ENCODE measurements at regions of chr12 and their contacts with region 1.

Region 1: GRCh38 chr12:124422570-124423523 is 128.0 kb downstream of the RFLNA start:
- DNase-seq: peak; percentile 92
- H3K4me3 ChIP-seq: peak overlapping the region in 3 of 4 donors; percentile 4 to 40 (median 26)
- H3K27ac ChIP-seq: peak overlapping the region; percentile 93 to 98 (median 98)
- H3K4me1 ChIP-seq: peaks cover 32 to 55% (median 43%) of the 10 kb centered on the region in 4 donors
- H3K27me3 ChIP-seq: no peaks in the 10 kb centered on the region
- CTCF ChIP-seq: peak in 2 of 5 experiments; percentile 17 to 24
- EP300 ChIP-seq: peak; percentile 85
- POLR2A ChIP-seq: peak; percentile 43

Region 2: GRCh38 chr12:124388679-124389536 is 33.9 kb before region 1 on chr12:
- in situ Hi-C with region 1: no loop called
- intact Hi-C with region 1: loop called (anchors 5 kb)
- DNase-seq: peak; percentile 85
- H3K4me3 ChIP-seq: peak overlapping the region; percentile 11 to 60 (median 35)
- H3K27ac ChIP-seq: peak overlapping the region; percentile 87 to 92 (median 91)
- H3K4me1 ChIP-seq: peaks cover 50 to 78% (median 62%) of the 10 kb centered on the region in 4 donors
- H3K27me3 ChIP-seq: no peaks in the 10 kb centered on the region
- CTCF ChIP-seq: peak in 1 of 5 experiments; percentile 14
- EP300 ChIP-seq: no peak
- POLR2A ChIP-seq: peak; percentile 49

Region 3: GRCh38 chr12:124457287-124458219 is 34.7 kb after region 1 on chr12:
- in situ Hi-C with region 1: no loop called
- intact Hi-C with region 1: loop called (anchors 5 kb)
- DNase-seq: peak; percentile 73
- H3K4me3 ChIP-seq: peak overlapping the region; percentile 9 to 36 (median 22)
- H3K27ac ChIP-seq: peak overlapping the region; percentile 84 to 94 (median 86)
- H3K4me1 ChIP-seq: peaks cover 33 to 60% (median 46%) of the 10 kb centered on the region in 4 donors
- H3K27me3 ChIP-seq: no peaks in the 10 kb centered on the region
- CTCF ChIP-seq: no peak
- EP300 ChIP-seq: no peak
- POLR2A ChIP-seq: no peak

Region 4: DNA sequence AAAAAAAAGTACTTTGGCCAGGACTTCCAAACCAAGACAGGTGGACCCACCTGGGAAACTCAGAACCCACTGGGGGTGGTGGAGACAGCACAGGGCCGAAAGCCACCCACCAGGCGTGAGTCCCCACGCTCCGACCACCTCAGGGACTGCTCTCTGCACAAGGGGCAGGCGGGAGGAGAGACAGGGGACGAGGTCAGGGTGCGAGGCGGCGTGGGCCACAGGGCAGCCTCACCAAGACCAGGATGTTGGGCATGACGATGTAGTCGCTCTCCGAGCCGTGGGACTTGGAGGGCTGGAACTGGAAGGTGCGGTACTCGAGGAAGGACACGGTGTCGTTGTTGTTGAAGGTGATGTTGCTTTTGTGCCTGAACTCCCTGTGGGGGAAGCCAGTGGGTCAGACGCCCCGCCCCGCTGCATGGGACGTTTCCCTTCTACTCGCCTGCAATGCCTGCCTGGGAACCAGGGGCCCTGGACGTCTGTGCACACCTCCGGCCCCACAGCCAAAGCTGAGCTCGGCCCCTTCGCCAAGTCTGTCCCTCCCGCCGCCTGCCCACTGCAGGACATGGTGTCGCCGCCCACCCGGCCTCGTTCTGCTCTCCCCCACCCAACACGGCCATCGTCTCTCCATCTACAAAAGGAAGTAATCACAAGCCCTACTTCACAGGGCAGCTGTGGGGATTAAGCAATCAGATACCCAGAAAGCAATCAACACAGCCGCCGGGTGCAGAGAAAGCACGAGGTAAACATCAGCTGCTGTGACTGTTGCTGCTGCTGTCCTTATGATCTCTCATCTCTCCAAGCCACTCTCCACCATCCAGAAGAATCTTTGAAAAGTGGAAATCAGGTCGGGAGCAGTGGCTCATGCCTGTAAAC is 392.1 kb after region 1 on chr12:
- in situ Hi-C with region 1: no loop called
- intact Hi-C with region 1: no loop called
- DNase-seq: peak; percentile 25
- H3K4me3 ChIP-seq: no peak overlapping the region
- H3K27ac ChIP-seq: no peak overlapping the region
- H3K4me1 ChIP-seq: no peaks in the 10 kb centered on the region
- H3K27me3 ChIP-seq: no peaks in the 10 kb centered on the region
- CTCF ChIP-seq: no peak
- EP300 ChIP-seq: no peak
- POLR2A ChIP-seq: no peak

Measured in transverse colon (tissue), 4 donors.